Astrocyte of the cerebellum (primary cell): ENCODE measurements at regions of chr20 and their contacts with region 1.

Region 1: GRCh38 chr20:50085452-50086365 is 27.2 kb downstream of the UBE2V1 start:
- DNase-seq: peak; percentile 57
- H3K4me3 ChIP-seq: no peak overlapping the region
- CTCF ChIP-seq: peak; percentile 87

Region 2: GRCh38 chr20:49982346-49983122 is 103.2 kb before region 1 on chr20 and contains the start of gene SNAI1:
- in situ Hi-C with region 1: loop called (anchors 25 kb)
- DNase-seq: peak; percentile 61
- H3K4me3 ChIP-seq: peak within 1 kb of the TSS; percentile 98
- CTCF ChIP-seq: peak; percentile 63

Region 3: DNA sequence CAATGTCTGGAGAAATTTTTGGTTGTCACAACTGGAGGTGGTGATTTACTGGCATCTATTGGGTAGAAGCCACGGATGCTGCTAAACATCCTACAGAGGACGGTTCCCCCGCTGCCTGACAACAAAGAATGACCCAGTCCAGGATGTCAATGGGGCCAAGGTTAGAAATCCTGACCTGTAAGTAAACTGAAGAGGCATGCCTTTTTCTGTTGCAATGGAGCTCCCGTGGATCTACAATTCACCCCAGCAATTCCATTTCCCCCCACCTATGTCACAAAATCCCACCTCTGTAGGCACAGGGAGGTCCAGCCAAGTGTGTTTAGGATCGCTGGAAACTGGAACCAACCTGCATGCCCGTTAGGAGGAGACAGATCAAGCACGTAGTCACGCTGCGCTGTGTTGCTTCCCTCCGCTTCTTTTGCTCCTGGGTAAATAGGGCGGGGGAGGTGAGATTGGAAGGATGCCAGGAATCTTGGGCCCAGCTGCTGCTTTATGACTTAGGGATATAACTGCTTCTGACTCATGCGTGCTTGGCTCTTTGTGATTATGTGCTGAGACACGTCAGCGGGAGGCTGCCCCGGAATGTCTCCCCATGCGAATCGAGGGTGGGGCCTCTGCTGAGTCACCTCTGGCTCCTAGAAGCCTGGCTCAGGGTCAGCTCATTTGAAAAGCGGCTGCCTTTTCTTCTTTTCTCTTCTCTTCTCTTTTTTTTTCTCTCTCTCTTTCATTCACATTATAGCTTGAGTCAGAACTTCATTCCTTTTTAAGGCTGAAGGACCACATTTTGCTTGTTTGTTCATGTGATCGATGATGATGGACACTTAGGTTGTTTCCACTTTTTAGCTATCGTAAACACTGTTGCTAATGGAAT is 80.2 kb after region 1 on chr20:
- in situ Hi-C with region 1: no loop called
- DNase-seq: peak; percentile 100
- H3K4me3 ChIP-seq: peak overlapping the region; percentile 33
- CTCF ChIP-seq: no peak